ENCODE measurements at regions of chr2 and their contacts with region 1.

Region 1: DNA sequence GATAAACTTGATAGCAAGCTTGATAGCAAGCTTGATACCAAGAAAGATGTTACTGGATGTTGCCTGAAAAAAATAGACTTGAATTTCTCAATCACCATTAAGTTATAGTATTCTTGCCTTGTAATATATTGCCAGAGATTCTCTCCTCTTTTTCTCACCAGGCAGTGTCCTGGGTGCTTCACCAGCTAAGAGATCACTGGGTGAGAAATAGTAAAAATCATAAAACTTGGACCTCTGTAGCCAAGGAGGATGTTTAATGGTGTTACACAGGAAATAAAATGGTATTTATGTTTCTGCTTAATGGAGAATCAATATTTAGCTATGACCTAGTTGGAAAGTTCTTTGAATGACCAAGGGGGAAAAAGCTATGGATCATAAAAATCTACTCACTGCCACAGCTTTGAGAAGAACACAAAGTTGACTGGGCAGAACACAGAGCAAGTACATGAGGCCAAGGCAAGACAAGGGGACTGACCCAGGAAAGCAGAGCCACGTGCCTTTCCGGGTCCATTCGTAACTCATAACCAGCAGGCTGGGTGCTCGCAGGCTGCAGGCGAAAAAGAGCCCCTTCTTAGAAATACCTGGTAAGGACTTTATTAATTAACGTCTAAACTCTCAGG is 129.4 kb upstream of the HNMT start:
- DNase-seq: no peak
- H3K4me3 ChIP-seq: no peak overlapping the region
- H3K27ac ChIP-seq: no peak overlapping the region
- H3K4me1 ChIP-seq: no peaks in the 10 kb centered on the region
- H3K27me3 ChIP-seq: no peaks in the 10 kb centered on the region
- CTCF ChIP-seq: no peak
- POLR2A ChIP-seq: no peak

Region 2: GRCh38 chr2:137659612-137660011 is 175.3 kb before region 1 on chr2:
- intact Hi-C with region 1: no loop called
- DNase-seq: no peak
- H3K4me3 ChIP-seq: no peak overlapping the region
- H3K27ac ChIP-seq: no peak overlapping the region
- H3K4me1 ChIP-seq: no peaks in the 10 kb centered on the region
- H3K27me3 ChIP-seq: no peaks in the 10 kb centered on the region
- CTCF ChIP-seq: no peak
- POLR2A ChIP-seq: no peak

Region 3: GRCh38 chr2:138177640-138178039 is 342.8 kb after region 1 on chr2:
- intact Hi-C with region 1: loop called (anchors 5 kb)
- DNase-seq: no peak
- H3K4me3 ChIP-seq: no peak overlapping the region
- H3K27ac ChIP-seq: no peak overlapping the region
- H3K4me1 ChIP-seq: no peaks in the 10 kb centered on the region
- H3K27me3 ChIP-seq: no peaks in the 10 kb centered on the region
- CTCF ChIP-seq: no peak
- POLR2A ChIP-seq: no peak

Measured in breast epithelium (tissue), 4 donors.